Uterus (tissue), 4 donors: ENCODE measurements at regions of chrX and their contacts with region 1.

Region 1: GRCh38 chrX:133434308-133434771 is 19.1 kb upstream of the GPC4 start:
- DNase-seq: no peak
- H3K4me3 ChIP-seq: no peak overlapping the region
- H3K27ac ChIP-seq: no peak overlapping the region
- H3K4me1 ChIP-seq: no peaks in the 10 kb centered on the region
- H3K27me3 ChIP-seq: no peaks in the 10 kb centered on the region
- CTCF ChIP-seq: no peak
- POLR2A ChIP-seq: no peak

Region 2: GRCh38 chrX:133323431-133323830 is 110.9 kb before region 1 on chrX:
- intact Hi-C with region 1: loop called (anchors 10 kb)
- DNase-seq: no peak
- H3K4me3 ChIP-seq: no peak overlapping the region
- H3K27ac ChIP-seq: no peak overlapping the region
- H3K4me1 ChIP-seq: no peaks in the 10 kb centered on the region
- H3K27me3 ChIP-seq: no peaks in the 10 kb centered on the region
- CTCF ChIP-seq: no peak
- POLR2A ChIP-seq: no peak

Region 3: DNA sequence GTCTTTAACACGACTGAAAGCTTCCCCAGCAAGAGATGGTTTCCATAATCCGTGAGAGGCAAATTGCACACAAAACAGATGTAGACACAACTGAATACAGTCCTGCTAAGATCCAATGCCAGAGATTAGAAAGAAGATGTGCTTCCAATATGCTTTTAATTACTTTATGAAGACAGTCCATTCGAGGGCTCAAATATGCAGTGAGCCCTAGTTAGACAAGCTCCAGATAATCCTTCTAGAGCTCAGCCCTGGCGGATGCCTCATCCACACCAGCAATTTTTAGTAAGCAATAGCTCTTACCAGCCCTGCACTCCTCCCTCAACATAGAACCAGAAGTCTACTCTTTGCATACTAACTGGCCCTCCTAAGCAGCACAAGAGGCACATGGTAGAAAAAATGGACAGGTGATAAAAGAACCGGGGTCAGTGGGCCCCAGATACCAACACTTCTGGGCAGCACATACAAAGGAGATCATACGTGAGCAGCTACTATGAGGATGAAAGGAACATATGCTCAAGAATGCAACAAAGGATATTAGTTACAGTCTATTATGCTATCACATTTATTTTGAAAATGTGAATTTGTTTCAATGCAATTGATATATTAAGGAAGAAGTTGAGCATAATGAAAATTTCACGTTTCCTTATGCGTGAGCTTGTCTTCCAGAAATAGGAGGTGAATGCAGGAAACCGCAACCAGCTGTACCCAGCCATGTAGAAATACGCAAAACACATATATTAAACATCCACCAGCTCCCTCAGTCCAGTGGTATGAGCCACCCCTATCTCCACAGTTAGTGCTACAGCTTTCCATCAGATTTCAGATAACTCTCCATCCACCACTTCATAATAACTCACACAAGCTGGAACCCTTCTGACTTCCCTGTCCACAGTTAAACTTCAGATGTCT is 53.4 kb before region 1 on chrX:
- intact Hi-C with region 1: no loop called
- DNase-seq: no peak
- H3K4me3 ChIP-seq: no peak overlapping the region
- H3K27ac ChIP-seq: no peak overlapping the region
- H3K4me1 ChIP-seq: no peaks in the 10 kb centered on the region
- H3K27me3 ChIP-seq: no peaks in the 10 kb centered on the region
- CTCF ChIP-seq: no peak
- POLR2A ChIP-seq: no peak

Region 4: GRCh38 chrX:133402042-133402453 is 32.3 kb before region 1 on chrX:
- intact Hi-C with region 1: no loop called
- DNase-seq: no peak
- H3K4me3 ChIP-seq: no peak overlapping the region
- H3K27ac ChIP-seq: peak overlapping the region; percentile 31 to 59
- H3K4me1 ChIP-seq: no peaks in the 10 kb centered on the region
- H3K27me3 ChIP-seq: no peaks in the 10 kb centered on the region
- CTCF ChIP-seq: no peak
- POLR2A ChIP-seq: no peak